Sciatic nerve (tissue), 2 donors: ENCODE measurements at regions of chr5 and their contacts with region 1.

Region 1: DNA sequence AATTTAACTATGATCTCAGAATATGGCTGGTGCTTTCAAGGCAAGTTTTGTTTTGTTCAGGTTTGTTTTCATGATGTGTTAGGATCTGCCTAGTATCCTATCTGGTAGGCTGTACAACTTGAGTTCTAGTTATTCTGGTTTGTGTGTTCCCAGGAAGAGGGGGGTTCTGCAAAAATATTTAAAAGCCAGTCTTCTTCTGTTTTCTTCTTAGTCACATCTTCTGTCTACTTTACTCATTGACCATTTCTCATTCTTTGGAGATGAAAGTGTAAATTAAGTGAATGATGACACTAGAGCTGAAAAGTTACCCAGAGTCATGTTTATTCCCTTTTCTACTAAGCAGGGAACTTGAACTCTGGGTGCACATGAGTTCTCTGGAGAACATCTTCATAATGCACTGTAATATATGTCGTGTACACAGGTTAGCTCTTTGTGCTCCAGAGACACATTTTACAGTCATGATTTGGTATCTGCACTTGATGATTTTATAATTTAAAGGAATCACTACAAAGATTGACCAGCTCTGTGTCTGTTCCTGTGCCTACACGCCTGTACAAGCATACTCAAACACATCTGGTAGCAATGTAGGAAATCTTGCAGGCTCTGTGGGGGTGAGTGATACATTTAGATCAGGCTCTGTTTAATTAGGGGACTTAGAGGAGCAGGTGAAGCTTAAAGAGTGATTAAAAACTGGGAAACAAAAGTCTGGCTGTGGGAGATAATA is 5.0 kb downstream of the SMAD5 start:
- DNase-seq: no peak
- ATAC-seq: no peak

Region 2: GRCh38 chr5:136020383-136021015 is 117.2 kb before region 1 on chr5:
- intact Hi-C with region 1: no loop called
- DNase-seq: no peak
- ATAC-seq: peak; percentile 40

Region 3: DNA sequence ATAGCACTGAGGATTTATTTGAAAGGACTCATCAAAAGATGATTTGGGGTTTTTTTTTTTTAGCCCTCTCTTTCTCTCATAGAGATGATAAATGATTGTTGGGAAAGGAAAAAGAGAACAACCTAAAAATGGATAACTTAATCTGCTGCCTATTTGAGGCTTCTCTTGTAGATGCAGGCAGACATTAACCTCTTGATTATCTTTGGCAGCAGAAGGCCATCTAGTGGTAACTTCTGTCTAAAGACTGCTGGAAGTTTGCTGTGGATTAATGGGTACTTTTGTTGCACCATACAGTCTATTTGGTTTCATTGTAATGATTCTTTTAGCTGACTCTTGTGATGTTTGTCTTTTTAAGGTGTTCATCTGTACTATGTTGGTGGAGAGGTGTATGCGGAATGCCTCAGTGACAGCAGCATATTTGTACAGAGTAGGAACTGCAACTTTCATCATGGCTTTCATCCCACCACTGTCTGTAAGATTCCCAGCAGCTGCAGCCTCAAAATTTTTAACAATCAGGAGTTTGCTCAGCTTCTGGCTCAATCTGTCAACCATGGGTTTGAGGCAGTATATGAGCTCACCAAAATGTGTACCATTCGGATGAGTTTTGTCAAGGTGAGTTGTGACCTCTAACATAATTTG is 36.5 kb after region 1 on chr5:
- intact Hi-C with region 1: loop called (anchors 5 kb)
- DNase-seq: no peak
- ATAC-seq: no peak